ENCODE measurements at regions of chr16 and their contacts with region 1.

Region 1: DNA sequence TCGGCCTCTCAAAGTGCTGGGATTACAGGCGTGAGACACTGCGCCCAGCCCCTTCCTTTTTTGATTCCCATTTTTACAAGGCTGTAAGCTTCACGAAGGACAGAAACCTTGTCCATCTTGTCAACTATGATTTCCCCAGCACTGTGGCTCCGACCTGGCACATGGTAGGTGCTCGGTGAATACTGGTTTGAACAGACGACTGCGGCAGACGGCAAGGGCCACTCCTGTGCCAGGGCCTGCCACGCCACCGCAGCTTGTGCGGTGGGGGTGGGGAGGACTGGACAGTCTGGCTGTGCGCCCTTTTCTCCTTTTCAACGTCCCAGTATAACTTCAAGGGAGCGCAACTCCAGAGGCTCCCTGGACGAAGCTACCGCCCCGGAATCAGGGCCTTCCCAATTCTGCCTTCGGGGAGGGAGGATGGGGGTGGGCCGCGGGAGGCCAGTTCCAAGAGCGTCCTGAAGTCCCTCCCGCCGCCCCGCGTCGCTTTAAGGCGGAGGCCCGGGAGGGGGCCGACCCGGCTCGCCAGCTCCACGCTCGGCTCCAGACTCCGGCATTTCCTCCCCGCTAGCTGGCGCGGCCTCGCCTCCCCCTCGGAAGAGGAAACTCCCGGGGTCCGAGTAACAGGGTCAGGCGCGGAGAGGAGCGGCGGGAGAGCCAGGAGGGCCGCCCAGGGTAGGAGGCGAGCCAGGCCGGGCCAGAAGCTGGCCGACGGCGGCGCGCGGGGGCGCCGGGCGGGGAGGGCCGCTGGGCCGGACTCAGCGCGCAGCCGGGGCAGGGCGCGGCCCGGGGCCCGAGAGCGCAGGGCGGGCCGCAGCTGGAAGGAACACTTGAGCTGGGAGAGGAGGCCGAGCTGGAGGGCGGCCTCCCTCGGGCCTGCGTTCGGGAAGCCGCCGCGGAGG is at the start of gene ITPRIPL2:
- DNase-seq: peak; percentile 95
- H3K4me3 ChIP-seq: peak within 1 kb of the TSS; percentile 57 to 90 (median 69)
- H3K27ac ChIP-seq: peak within 1 kb of the TSS; percentile 91 to 97 (median 96)
- H3K4me1 ChIP-seq: peaks cover 0 to 52% (median 43%) of the 10 kb centered on the region in 4 donors
- H3K27me3 ChIP-seq: no peaks in the 10 kb centered on the region
- CTCF ChIP-seq: no peak
- EP300 ChIP-seq: no peak
- POLR2A ChIP-seq: peak; percentile 46 to 71
- total RNA-seq, gene ITPRIPL2: 28.1 to 61.6 (median 44.2) TPM

Region 2: DNA sequence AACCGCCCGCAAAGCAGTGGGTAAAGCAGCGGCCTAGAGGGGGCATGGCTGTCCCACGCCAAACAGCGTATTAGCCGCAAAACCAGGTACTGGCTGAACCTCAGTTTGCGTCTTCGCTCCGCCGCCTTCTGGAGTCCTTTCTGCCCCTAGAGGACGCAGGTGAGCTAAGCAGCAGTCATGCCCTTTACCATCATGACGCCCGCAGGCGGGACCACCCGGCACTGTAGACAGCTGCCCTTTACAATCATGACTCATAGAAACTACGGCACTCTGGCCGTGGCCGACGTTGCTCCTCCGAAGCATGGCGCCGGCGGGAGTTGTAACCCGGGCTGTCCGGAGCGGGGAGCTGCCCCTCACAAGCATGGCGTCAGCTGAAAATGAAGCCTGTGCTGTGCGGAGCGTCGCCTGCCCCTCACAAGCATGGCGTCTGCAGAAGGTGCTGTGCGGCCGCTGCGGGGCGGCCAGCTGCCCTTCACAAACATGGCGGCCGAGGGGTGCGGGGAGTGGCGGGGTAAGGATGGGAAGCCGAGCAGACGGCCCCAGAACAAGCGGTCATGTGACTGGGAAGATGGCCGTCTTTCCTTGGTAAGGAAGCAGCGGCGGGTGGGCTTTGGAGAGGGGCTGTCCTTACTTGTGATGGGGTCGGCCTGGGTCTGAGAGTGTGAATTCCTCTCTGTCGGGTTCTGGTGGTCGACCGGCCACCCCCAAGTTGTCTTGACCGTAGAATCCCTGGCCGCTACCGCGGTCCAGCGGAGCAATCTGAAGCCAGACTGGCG is 441.6 kb after region 1 on chr16 and contains the start of gene VPS35L:
- intact Hi-C with region 1: loop called (anchors 5 kb)
- DNase-seq: peak; percentile 98
- H3K4me3 ChIP-seq: peak within 1 kb of the TSS; percentile 69 to 88 (median 76)
- H3K27ac ChIP-seq: peak within 1 kb of the TSS; percentile 86 to 90 (median 88)
- H3K4me1 ChIP-seq: peaks cover 0 to 18% (median 17%) of the 10 kb centered on the region in 4 donors
- H3K27me3 ChIP-seq: no peaks in the 10 kb centered on the region
- CTCF ChIP-seq: peak; percentile 64 to 72 (median 68)
- EP300 ChIP-seq: peak in 1 of 4 donors; percentile 4
- POLR2A ChIP-seq: peak in 1 of 2 donors; percentile 22
- total RNA-seq, gene VPS35L: 34.6 to 53.7 (median 47.8) TPM